ENCODE measurements at regions of chr12 and their contacts with region 1.

Region 1: DNA sequence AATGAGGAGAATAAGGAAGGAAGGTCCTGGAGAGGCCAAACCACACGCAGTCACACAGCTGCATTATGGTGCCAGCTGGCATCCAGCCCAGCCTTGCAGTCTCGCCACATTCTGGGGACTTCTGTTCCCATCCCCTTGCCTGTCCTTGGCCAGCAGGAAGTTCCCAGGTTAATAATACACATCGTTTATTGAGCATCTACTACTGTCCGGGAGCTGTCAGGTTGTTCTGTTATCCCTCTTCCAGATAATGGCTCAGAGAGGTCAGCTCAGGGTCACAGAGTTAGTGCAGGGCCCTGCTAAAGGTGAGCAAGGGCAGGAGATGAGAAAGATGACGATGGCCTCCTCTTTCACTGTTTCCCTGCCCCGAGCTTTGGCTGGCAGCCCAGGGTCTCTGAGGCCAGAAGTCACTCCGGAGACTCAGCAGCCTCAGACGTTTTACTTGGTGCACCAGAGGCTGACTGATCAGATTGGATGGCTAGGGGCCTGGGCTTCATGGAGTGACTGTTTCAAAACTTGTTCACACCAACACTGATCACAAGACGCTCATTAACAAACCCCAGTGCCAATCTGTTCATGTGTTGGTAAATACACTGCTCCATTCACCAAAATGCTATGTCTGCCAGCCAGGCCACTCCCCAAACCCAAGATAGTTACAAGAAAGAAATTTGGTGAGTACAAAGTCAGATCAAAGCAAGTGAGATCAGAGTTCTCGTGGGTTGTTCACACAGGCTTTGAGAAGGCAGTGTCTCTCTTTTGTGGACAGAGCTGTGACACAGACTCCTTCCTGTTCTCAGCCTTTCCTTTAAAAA is 79.2 kb downstream of the B4GALNT3 start:
- DNase-seq: peak; percentile 66 to 81 (median 81)
- H3K4me3 ChIP-seq: no peak overlapping the region
- H3K27ac ChIP-seq: no peak overlapping the region
- H3K4me1 ChIP-seq: peaks cover 0 to 13% (median 11%) of the 10 kb centered on the region in 4 experiments
- H3K27me3 ChIP-seq: peaks cover 0 to 11% (median 0%) of the 10 kb centered on the region in 5 experiments

Region 2: DNA sequence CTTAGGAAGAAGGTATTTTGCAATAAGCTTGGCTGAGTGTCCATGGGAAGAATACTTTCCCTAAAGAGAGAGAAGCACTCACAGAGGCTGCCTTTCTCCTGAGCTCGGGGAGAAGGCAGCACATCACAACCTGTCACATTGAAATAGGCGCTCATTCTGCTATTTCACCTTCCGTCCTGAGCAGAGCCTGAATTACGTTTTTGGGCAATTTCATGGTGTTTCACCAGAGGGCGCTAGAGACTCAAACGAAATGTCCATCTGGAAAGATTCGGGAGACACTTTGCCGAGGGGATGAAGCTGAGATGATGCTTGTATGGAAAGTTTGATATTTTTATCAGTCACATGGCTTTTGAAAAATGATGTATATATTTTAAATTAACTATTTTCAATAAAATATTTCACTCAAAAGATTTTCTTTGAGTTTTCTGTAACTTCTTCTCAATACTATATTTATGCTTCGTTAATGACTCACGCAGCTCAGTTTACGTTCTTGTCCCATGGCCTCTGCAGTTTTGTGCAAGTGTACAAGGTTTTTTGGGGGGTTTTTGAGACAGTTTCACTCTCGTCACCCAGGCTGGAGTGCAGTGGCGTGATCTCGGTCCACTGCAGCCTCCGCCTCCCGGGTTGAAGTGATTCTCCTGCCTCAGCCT is 96.6 kb before region 1 on chr12:
- CTCF ChIA-PET with region 1: interaction called, 132 read pairs
- POLR2A ChIA-PET with region 1: interaction called, 3 read pairs
- DNase-seq: peak; percentile 34 to 57 (median 47)
- H3K4me3 ChIP-seq: no peak overlapping the region
- H3K27ac ChIP-seq: no peak overlapping the region
- H3K4me1 ChIP-seq: no peaks in the 10 kb centered on the region
- H3K27me3 ChIP-seq: peaks cover 0 to 2% (median 0%) of the 10 kb centered on the region in 5 experiments